Naive thymus-derived CD4-positive, alpha-beta T cell (primary cell): ENCODE measurements at regions of chr2 and their contacts with region 1.

Region 1: DNA sequence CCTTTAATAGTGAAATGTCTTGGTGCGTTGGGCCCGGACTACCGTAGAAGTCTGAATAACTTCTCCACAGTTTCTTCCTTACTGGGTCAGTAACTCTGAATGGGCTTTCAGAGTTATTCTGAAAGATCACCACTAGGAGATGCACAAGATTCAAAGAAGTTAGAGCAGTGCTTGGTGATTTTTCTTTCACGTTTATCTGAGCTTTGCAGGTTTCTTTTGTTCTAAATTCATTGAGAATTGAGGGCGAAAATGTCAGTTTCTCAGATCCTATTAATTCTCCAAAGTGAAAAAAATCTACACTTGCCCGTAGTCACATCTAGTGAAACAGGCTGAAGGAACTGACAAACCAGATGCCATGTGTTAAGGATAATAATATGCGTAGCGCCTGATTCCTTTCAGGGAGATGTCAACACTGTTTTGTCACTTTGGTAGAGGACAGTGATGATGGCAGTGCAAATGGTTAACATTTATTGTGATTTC is 70.1 kb downstream of the QPCT start:
- DNase-seq: peak in 6 of 9 donors; percentile 28 to 63 (median 57)
- ATAC-seq: peak; percentile 85
- H3K4me3 ChIP-seq: no peak overlapping the region
- H3K4me3 Mint-ChIP-seq: no peak overlapping the region
- H3K27ac ChIP-seq: no peak overlapping the region
- H3K27ac Mint-ChIP-seq: no peak overlapping the region
- H3K4me1 ChIP-seq: no peaks in the 10 kb centered on the region
- H3K4me1 Mint-ChIP-seq: peaks cover 0 to 7% (median 5%) of the 10 kb centered on the region in 7 donors
- H3K27me3 ChIP-seq: no peaks in the 10 kb centered on the region
- H3K27me3 Mint-ChIP-seq: peaks cover 0 to 17% (median 0%) of the 10 kb centered on the region in 5 donors

Region 2: DNA sequence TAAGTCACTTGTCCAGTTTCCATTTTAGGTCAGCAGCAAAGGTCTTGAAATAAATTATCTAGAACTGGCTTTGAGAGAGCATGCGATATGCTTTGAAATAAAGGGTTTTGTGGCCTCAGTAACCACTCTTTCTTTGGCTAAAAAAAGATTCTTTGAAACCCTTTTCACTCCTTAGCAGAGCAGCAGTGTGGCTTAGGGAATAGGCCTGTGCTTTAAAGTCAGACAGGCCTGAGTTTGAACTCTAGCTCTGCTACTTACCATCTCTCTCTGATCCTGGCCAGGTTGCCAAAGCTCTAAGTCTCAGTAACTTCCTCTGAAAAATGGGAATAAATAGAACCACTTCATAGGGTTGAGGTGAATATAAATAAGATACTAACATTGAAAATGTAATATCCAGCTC is 17.3 kb before region 1 on chr2:
- CTCF ChIA-PET with region 1: interaction called, 22 read pairs
- POLR2A ChIA-PET with region 1: no interaction called
- intact Hi-C with region 1: loop called in 1 of 2 experiments (anchors 1 kb)
- DNase-seq: no peak
- ATAC-seq: no peak
- H3K4me3 ChIP-seq: no peak overlapping the region
- H3K4me3 Mint-ChIP-seq: no peak overlapping the region
- H3K27ac ChIP-seq: no peak overlapping the region
- H3K27ac Mint-ChIP-seq: no peak overlapping the region
- H3K4me1 ChIP-seq: no peaks in the 10 kb centered on the region
- H3K4me1 Mint-ChIP-seq: peaks cover 0 to 6% (median 3%) of the 10 kb centered on the region in 7 donors
- H3K27me3 ChIP-seq: no peaks in the 10 kb centered on the region
- H3K27me3 Mint-ChIP-seq: peaks cover 0 to 35% (median 0%) of the 10 kb centered on the region in 5 donors

Region 3: DNA sequence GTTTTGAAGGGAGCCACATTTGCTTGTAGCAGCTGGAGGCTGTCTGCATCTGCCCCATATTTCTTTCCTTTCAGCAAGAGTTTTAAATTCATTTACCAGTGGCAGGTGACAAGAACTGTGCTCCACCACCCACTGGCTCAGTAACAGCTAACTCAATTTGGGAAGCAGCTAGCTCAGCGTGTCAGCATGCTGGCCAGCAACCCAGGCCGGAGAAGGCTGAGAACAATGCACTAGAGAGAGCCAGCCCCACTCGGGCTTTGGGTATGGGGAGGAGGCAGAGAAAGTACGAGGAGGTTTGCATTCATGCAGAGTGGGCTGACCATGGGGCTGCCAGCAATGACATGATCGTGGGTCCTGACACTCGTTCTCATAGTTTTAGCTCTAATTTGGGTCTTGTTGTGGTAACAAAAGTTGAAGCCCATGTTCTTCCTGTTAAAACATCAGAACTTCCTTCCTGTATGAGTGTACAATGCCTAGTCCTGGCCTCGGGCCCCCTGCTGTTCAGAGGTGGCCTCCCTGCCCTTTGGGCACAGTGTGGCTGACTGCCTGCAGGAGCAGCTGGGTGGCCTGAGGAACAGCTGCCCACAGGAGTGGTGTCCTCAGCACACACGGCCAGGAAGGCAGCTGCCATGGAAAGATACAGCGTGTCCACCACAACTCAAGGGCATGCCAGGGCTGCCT is 234.0 kb after region 1 on chr2:
- CTCF ChIA-PET with region 1: no interaction called
- POLR2A ChIA-PET with region 1: no interaction called
- intact Hi-C with region 1: loop called in 1 of 2 experiments (anchors 1 kb)
- DNase-seq: no peak
- ATAC-seq: peak; percentile 88
- H3K4me3 ChIP-seq: peak overlapping the region; percentile 9
- H3K4me3 Mint-ChIP-seq: peak overlapping the region; percentile 17 to 79 (median 65)
- H3K27ac ChIP-seq: no peak overlapping the region
- H3K27ac Mint-ChIP-seq: peak overlapping the region; percentile 77 to 95 (median 90)
- H3K4me1 ChIP-seq: peaks cover 40 to 91% of the 10 kb centered on the region in 2 donors
- H3K4me1 Mint-ChIP-seq: peaks cover 62 to 95% (median 79%) of the 10 kb centered on the region in 7 donors
- H3K27me3 ChIP-seq: no peaks in the 10 kb centered on the region
- H3K27me3 Mint-ChIP-seq: no peaks in the 10 kb centered on the region

Region 4: DNA sequence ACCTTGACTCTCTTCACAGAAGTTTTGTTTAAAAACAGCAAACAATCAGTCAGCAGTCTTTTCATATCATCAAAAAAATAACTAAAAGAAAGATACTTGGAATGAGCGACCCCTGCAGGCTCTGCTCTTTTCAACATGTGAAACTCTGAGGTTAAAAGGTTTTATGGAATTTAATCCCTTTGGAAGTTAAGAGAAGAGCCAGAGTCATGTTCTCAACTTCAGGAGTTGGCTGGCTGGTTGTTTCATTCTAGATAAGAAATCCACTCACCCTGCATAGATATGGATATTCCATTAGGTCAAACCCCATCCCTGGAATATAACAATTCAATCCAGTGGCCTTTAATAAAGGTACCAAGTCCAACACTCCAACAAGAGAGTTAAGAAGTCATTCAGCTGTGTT is 395.0 kb after region 1 on chr2:
- CTCF ChIA-PET with region 1: no interaction called
- POLR2A ChIA-PET with region 1: no interaction called
- intact Hi-C with region 1: loop called in 1 of 2 experiments (anchors 1 kb)
- DNase-seq: no peak
- ATAC-seq: no peak
- H3K4me3 ChIP-seq: no peak overlapping the region
- H3K4me3 Mint-ChIP-seq: no peak overlapping the region
- H3K27ac ChIP-seq: no peak overlapping the region
- H3K27ac Mint-ChIP-seq: no peak overlapping the region
- H3K4me1 ChIP-seq: no peaks in the 10 kb centered on the region
- H3K4me1 Mint-ChIP-seq: peaks cover 0 to 6% (median 0%) of the 10 kb centered on the region in 7 donors
- H3K27me3 ChIP-seq: no peaks in the 10 kb centered on the region
- H3K27me3 Mint-ChIP-seq: peaks cover 0 to 11% (median 5%) of the 10 kb centered on the region in 5 donors

Region 5: DNA sequence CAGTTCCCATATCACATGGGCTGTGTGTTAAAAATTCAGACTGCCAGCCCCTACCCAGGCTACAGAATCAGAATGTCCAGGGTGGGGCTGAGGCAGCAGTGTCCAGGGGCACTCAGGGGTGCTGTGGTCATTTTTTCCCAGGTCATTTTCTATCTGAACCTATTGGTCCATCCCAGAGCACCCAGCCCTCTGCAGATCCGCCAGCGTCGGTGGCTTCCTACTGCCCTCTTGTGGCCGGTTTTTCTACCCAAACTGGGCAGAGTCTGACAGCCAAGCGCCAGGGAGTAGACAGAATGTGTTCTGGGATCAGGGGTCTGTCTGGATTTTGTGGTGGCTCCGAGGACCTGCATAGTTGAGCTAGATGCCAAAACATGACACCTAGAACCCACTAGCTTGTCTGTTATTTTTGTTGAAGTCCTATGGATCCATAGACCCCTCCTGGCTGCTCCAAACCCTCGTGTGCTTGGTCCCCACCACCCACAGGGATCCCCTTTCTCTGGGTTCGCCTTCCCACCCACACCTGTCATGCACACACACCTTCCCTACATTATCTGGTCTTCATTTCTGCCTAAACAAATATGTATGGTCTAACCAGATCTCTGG is 476.5 kb after region 1 on chr2:
- CTCF ChIA-PET with region 1: interaction called, 3 read pairs
- POLR2A ChIA-PET with region 1: no interaction called
- intact Hi-C with region 1: loop called in 1 of 2 experiments (anchors 5 kb)
- DNase-seq: peak; percentile 17 to 63 (median 44)
- ATAC-seq: peak; percentile 72
- H3K4me3 ChIP-seq: no peak overlapping the region
- H3K4me3 Mint-ChIP-seq: peak overlapping the region in 6 of 10 donors; percentile 12 to 75 (median 55)
- H3K27ac ChIP-seq: no peak overlapping the region
- H3K27ac Mint-ChIP-seq: peak overlapping the region in 2 of 9 donors; percentile 35 to 71
- H3K4me1 ChIP-seq: peaks cover 25 to 33% of the 10 kb centered on the region in 2 donors
- H3K4me1 Mint-ChIP-seq: peaks cover 24 to 58% (median 45%) of the 10 kb centered on the region in 7 donors
- H3K27me3 ChIP-seq: no peaks in the 10 kb centered on the region
- H3K27me3 Mint-ChIP-seq: peaks cover 0 to 29% (median 2%) of the 10 kb centered on the region in 5 donors